Ovary (tissue), 10 donors: ENCODE measurements at regions of chr11 and their contacts with region 1.

Region 1: DNA sequence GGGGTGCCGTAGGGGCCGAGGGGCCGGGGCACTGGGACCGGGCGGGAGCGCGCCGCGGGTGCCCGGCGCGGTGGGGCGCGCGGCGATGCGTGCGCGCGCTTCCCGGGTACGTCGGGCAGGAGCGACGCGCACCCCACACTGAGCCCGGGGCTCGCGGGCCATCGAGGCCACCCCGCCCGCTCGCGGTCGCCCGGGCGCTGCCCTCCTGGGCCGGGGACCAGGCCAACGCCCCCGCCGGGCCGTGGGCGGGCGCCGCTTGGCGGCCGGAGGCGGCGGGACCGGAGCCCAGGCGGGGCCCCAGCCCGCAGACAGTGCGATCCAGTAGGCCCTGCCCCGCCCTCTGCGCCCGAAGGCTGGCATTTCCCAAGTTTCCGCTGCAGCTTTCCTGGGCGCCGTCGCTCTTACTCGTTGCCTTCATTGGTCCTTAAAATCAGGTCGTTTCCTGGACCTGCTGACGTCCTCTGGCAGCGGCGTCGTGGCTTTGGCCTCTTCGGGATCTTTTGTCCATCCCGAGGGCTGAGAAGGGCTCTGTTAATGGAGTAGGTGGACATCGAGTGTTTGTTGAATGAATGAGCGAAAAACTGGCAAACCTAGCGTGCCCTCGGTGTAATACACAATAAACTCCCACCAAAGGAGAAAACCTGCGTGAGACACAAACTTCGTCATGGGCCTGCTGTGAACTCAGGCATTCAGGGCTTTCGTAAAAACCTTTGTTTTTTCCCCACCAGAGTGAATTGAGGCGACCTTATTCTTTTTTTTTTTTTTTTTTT is 638 bp downstream of the PARVA start:
- DNase-seq: peak; percentile 63 to 79 (median 73)
- H3K4me3 ChIP-seq: peak overlapping the region; percentile 69
- H3K27ac ChIP-seq: peak overlapping the region; percentile 96 to 99
- H3K4me1 ChIP-seq: peaks cover 13% of the 10 kb centered on the region
- H3K27me3 ChIP-seq: no peaks in the 10 kb centered on the region
- CTCF ChIP-seq: peak in 2 of 3 donors; percentile 23 to 29
- EP300 ChIP-seq: no peak
- POLR2A ChIP-seq: no peak

Region 2: GRCh38 chr11:11691296-11692142 is 686.5 kb before region 1 on chr11:
- intact Hi-C with region 1: no loop called
- DNase-seq: no peak
- H3K4me3 ChIP-seq: no peak overlapping the region
- H3K27ac ChIP-seq: no peak overlapping the region
- H3K4me1 ChIP-seq: no peaks in the 10 kb centered on the region
- H3K27me3 ChIP-seq: no peaks in the 10 kb centered on the region
- CTCF ChIP-seq: no peak
- EP300 ChIP-seq: no peak
- POLR2A ChIP-seq: no peak

Region 3: GRCh38 chr11:12159351-12160099 is 218.5 kb before region 1 on chr11:
- intact Hi-C with region 1: no loop called
- DNase-seq: peak in 1 of 5 donors; percentile 39
- H3K4me3 ChIP-seq: no peak overlapping the region
- H3K27ac ChIP-seq: peak overlapping the region; percentile 9 to 63
- H3K4me1 ChIP-seq: peaks cover 28% of the 10 kb centered on the region
- H3K27me3 ChIP-seq: no peaks in the 10 kb centered on the region
- CTCF ChIP-seq: no peak
- EP300 ChIP-seq: no peak
- POLR2A ChIP-seq: no peak

Region 4: DNA sequence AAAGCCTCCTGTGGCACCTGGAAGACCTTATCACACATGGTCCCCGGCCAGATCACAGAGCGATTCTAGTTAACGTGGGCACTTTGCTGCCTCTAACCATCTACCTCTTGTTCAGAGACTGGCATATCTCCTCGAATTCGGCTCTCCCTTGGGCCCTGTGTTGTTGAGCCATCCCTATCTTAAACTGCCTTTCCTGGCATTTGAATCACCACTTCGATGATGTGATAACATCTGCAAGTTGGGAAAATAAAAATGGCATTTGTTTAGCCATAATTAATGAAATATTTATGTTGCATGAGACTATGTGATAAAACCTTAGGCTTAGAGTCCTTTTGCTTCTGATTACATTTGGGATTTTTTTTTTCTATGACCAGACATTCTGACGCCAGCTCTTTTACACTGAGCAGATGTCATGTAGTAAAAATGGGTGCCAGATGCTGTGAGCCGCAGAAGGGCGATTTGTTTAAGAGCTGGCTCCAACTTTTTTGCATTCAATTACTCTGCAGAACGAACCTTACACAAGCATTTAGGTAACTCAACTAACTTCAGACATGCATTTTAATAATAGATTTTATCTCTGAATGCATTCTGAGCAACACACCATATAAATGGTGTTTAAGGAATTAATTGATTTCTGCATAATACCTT is 59.1 kb before region 1 on chr11:
- intact Hi-C with region 1: no loop called
- DNase-seq: no peak
- H3K4me3 ChIP-seq: no peak overlapping the region
- H3K27ac ChIP-seq: no peak overlapping the region
- H3K4me1 ChIP-seq: peaks cover 4% of the 10 kb centered on the region
- H3K27me3 ChIP-seq: peaks cover 2% of the 10 kb centered on the region
- CTCF ChIP-seq: no peak
- EP300 ChIP-seq: no peak
- POLR2A ChIP-seq: no peak

Region 5: DNA sequence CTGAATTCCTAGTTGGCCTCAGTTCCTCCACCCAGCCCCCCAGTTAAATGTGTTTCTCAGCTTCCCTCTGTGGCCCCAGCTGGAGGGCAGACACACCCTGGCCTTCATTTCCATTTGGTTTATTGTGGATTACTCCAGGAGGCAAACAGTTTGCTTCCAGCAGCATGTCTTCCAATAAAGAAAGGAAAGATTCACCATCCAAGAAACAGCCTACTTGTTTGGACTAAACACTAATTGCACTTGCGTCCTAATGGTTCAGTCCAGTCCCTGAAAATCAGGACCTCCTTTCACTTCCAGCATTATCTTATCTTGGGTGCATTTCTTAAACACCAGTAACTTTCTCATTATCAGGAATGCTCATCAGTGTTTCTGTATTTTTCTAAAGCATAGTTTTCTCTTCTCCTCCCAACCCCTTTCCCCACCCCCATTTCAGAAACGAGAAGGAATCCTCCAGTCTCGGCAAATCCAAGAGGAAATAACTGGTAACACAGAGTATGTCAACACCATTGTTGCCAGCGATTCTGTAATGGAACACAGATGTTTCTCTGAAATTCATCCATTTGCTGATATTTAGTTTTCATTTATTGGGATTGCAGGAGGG is 130.2 kb after region 1 on chr11:
- intact Hi-C with region 1: loop called in 1 of 4 experiments (anchors 10 kb)
- DNase-seq: peak; percentile 44 to 65 (median 56)
- H3K4me3 ChIP-seq: no peak overlapping the region
- H3K27ac ChIP-seq: peak overlapping the region in 1 of 2 donors; percentile 57
- H3K4me1 ChIP-seq: peaks cover 12% of the 10 kb centered on the region
- H3K27me3 ChIP-seq: no peaks in the 10 kb centered on the region
- CTCF ChIP-seq: no peak
- EP300 ChIP-seq: no peak
- POLR2A ChIP-seq: no peak